Right ventricle myocardium superior (tissue), 1 donor: ENCODE measurements at regions of chr9 and their contacts with region 1.

Region 1: GRCh38 chr9:100028201-100028784 is 70.5 kb downstream of the ERP44 start:
- DNase-seq: peak; percentile 65
- ATAC-seq: peak; percentile 93

Region 2: GRCh38 chr9:99563364-99563763 is 464.9 kb before region 1 on chr9:
- intact Hi-C with region 1: no loop called
- DNase-seq: no peak
- ATAC-seq: no peak

Region 3: GRCh38 chr9:99650187-99650874 is 378.0 kb before region 1 on chr9:
- intact Hi-C with region 1: no loop called
- DNase-seq: no peak
- ATAC-seq: no peak

Region 4: GRCh38 chr9:99840072-99840471 is 188.2 kb before region 1 on chr9:
- intact Hi-C with region 1: no loop called
- DNase-seq: no peak
- ATAC-seq: no peak

Region 5: GRCh38 chr9:100216178-100216787 is 188.0 kb after region 1 on chr9:
- intact Hi-C with region 1: loop called (anchors 5 kb)
- DNase-seq: no peak
- ATAC-seq: peak; percentile 48

Region 6: DNA sequence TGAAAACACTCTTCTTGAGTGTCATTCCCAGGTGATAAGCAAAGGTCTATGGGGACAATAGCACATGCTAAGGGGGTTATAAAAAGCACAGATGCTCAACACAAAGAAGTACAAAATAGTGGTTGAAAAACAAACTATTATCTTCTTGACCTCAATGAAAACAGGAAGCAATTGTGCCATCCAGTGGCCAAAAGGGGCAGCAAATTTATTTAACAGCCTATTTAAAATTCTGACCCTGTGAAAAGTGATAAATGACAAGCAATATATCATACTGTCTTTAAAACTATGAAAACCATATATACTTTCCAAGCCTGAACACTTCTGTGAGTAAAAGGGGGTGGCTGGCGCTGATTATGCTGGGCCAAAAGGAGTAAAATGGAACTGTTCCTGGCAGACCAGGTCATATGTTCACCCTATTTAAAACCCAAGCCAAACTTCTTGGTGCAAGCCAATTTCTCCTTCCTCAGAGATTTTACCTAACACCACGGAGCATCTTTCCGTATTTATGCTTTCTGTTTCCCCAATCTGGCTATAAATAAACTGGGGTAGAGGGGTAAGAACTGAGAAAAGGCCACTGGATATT is 294.8 kb after region 1 on chr9:
- intact Hi-C with region 1: loop called (anchors 5 kb)
- DNase-seq: no peak
- ATAC-seq: peak; percentile 45